Endothelial cell of umbilical vein (primary cell): ENCODE measurements at regions of chr22 and their contacts with region 1.

Region 1: GRCh38 chr22:19909350-19910179 is 32.0 kb upstream of the COMT start:
- DNase-seq: peak; percentile 77
- H3K4me3 ChIP-seq: no peak overlapping the region
- H3K27ac ChIP-seq: no peak overlapping the region
- H3K4me1 ChIP-seq: peaks cover 3% of the 10 kb centered on the region
- H3K27me3 ChIP-seq: no peaks in the 10 kb centered on the region
- CTCF ChIP-seq: peak; percentile 86 to 88
- POLR2A ChIP-seq: no peak

Region 2: GRCh38 chr22:19679522-19680101 is 230.0 kb before region 1 on chr22:
- CTCF ChIA-PET with region 1: interaction called, 18 read pairs
- POLR2A ChIA-PET with region 1: no interaction called
- dilution Hi-C with region 1: no loop called
- intact Hi-C with region 1: no loop called
- DNase-seq: peak; percentile 13
- H3K4me3 ChIP-seq: no peak overlapping the region
- H3K27ac ChIP-seq: no peak overlapping the region
- H3K4me1 ChIP-seq: no peaks in the 10 kb centered on the region
- H3K27me3 ChIP-seq: peaks cover 3 to 22% of the 10 kb centered on the region in 2 experiments
- CTCF ChIP-seq: peak; percentile 80 to 87
- POLR2A ChIP-seq: no peak

Region 3: DNA sequence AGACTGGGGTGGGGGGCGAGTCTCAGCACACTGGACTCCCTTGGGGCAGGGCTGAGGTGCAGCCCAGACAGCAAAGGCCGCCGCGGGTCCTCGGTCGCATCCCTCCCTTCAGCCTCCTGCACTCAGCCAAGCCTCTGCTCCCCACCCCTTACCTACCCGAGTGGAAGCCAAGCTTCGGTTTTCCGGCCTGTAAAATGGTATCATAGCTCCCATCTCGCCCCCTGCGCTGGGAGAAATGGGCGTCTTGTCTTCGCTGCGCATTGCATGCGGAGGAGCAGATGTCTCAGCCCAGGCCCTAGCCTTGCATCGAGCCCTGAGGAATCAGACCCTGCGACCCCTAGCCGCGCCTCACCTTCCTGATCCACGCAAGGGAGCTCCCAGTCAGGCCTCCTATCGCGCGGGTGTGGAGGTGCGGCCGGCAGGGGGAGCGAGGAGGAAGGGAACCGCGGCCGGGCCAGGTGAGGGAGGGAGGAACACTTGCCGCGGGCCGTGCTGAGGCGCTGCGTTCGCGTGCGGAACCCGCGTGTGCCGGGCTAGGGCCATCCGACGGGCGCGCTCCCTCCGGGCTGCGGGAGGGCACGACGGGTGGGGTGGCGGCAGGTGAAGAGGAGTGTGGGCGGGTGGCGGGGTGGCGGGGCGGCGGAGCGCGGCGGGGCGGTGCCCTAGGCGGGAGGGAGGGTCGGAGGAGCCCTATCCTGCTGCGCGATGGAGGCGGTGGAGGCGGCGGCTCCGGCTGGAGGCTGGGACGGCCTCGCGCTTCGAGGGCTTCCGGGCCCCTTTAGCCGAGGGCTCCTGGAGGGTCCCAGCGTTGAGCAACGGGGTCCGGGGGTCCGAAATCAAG is 153.1 kb before region 1 on chr22:
- CTCF ChIA-PET with region 1: interaction called, 73 read pairs
- POLR2A ChIA-PET with region 1: no interaction called
- dilution Hi-C with region 1: no loop called
- intact Hi-C with region 1: no loop called
- DNase-seq: peak; percentile 26
- H3K4me3 ChIP-seq: no peak overlapping the region
- H3K27ac ChIP-seq: no peak overlapping the region
- H3K4me1 ChIP-seq: peaks cover 9% of the 10 kb centered on the region
- H3K27me3 ChIP-seq: peaks cover 29 to 60% of the 10 kb centered on the region in 2 experiments
- CTCF ChIP-seq: peak; percentile 26 to 56
- POLR2A ChIP-seq: no peak

Region 4: GRCh38 chr22:19800761-19801244 is 108.8 kb before region 1 on chr22:
- CTCF ChIA-PET with region 1: interaction called, 14 read pairs
- POLR2A ChIA-PET with region 1: no interaction called
- dilution Hi-C with region 1: no loop called
- intact Hi-C with region 1: no loop called
- DNase-seq: peak; percentile 29
- H3K4me3 ChIP-seq: no peak overlapping the region
- H3K27ac ChIP-seq: no peak overlapping the region
- H3K4me1 ChIP-seq: peaks cover 2% of the 10 kb centered on the region
- H3K27me3 ChIP-seq: no peaks in the 10 kb centered on the region
- CTCF ChIP-seq: peak; percentile 24 to 65
- POLR2A ChIP-seq: no peak

Region 5: GRCh38 chr22:19868773-19869471 is 40.6 kb before region 1 on chr22:
- CTCF ChIA-PET with region 1: interaction called, 23 read pairs
- POLR2A ChIA-PET with region 1: no interaction called
- dilution Hi-C with region 1: no loop called
- intact Hi-C with region 1: loop called (anchors 2 kb)
- DNase-seq: no peak
- H3K4me3 ChIP-seq: no peak overlapping the region
- H3K27ac ChIP-seq: no peak overlapping the region
- H3K4me1 ChIP-seq: peaks cover under 1% of the 10 kb centered on the region
- H3K27me3 ChIP-seq: no peaks in the 10 kb centered on the region
- CTCF ChIP-seq: no peak
- POLR2A ChIP-seq: no peak

Region 6: DNA sequence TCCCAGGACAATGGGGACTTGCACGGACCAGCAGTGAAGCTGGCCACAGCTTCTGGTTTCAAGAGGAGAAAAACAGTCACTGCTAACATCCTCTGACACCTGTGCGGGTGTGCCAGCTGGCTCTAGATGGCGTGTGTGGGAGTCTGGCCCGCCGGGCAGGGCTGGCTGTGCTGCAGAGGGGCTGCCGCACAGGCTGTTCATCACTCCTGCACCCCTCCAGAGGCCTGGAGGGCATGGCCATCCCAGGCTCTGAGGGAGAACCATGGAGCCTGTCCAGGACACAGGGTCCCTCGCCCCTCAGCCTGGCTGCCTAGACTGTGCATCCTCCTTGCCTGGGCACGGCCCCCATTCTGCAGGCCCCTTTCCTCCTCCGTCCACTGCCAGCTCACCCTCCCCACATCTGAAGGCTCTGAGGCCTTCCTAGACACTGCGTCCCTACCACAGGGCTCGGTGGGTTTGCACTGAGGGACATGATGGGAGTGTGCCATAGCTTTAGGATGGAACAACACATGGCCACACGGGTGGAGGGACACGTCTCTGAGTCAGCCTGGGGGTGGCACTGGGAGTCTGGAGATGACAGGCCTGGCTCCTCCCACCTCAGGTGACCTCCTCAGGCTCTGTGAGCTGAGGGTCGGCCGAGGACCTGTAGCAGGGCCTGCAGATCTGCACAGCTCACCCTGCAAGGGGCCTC is 12.8 kb before region 1 on chr22:
- CTCF ChIA-PET with region 1: interaction called, 16 read pairs
- POLR2A ChIA-PET with region 1: no interaction called
- dilution Hi-C with region 1: no loop called
- intact Hi-C with region 1: no loop called
- DNase-seq: no peak
- H3K4me3 ChIP-seq: no peak overlapping the region
- H3K27ac ChIP-seq: no peak overlapping the region
- H3K4me1 ChIP-seq: peaks cover 25% of the 10 kb centered on the region
- H3K27me3 ChIP-seq: no peaks in the 10 kb centered on the region
- CTCF ChIP-seq: no peak
- POLR2A ChIP-seq: no peak

Region 7: GRCh38 chr22:19948057-19948760 is 38.6 kb after region 1 on chr22:
- CTCF ChIA-PET with region 1: interaction called, 23 read pairs
- POLR2A ChIA-PET with region 1: no interaction called
- dilution Hi-C with region 1: no loop called
- intact Hi-C with region 1: loop called (anchors 1 kb)
- DNase-seq: no peak
- H3K4me3 ChIP-seq: no peak overlapping the region
- H3K27ac ChIP-seq: peak overlapping the region; percentile 86
- H3K4me1 ChIP-seq: peaks cover 46% of the 10 kb centered on the region
- H3K27me3 ChIP-seq: no peaks in the 10 kb centered on the region
- CTCF ChIP-seq: no peak
- POLR2A ChIP-seq: no peak

Region 8: GRCh38 chr22:20027966-20028854 is 118.6 kb after region 1 on chr22:
- CTCF ChIA-PET with region 1: no interaction called
- POLR2A ChIA-PET with region 1: no interaction called
- dilution Hi-C with region 1: no loop called
- intact Hi-C with region 1: no loop called
- DNase-seq: peak; percentile 40
- H3K4me3 ChIP-seq: no peak overlapping the region
- H3K27ac ChIP-seq: no peak overlapping the region
- H3K4me1 ChIP-seq: no peaks in the 10 kb centered on the region
- H3K27me3 ChIP-seq: no peaks in the 10 kb centered on the region
- CTCF ChIP-seq: peak; percentile 31 to 39
- POLR2A ChIP-seq: no peak